ENCODE measurements at regions of chr10 and their contacts with region 1.

Region 1: DNA sequence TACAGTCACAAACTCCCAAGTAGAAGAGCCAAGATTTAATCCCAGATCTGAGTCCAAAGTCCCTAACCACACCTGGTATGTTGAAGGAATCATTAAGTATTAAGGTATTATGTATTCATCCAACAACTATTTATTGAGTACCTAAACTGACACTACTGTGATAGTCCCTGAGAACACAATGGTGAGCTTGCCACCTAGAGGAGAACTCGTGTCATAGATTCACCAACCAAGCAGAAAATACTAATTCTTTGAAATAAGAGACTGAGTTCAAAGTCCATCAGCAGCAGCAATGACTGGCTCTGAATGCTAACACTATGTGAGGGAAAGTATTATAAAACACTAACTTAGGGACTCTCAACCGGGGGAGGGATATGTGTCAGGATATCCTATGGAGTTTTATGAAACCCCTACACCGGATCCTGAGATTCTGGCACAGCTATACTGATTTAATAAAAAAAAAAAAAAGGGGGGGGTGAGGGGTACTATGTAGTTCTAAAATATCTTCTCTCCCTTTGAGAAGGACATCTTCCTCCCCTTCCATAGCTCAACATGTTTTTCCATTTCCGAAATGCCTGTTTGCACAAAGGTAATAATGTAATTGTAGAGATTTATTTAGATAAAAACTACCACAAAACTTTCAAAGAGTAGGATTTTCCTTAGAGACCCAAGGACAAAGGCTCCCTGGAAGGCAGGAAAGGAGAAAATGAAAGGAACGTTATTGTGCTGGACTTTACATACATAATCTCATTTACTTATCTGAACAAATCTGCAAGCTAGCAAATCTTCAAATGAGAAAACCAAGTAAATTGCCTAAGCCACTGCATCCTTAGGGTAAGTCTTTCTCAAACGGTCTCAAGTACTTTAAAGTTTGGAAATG is 1.6 kb downstream of the NCOA4 start:
- DNase-seq: peak; percentile 71
- ATAC-seq: peak; percentile 49
- H3K4me3 ChIP-seq: peak overlapping the region; percentile 86
- H3K27ac ChIP-seq: peak overlapping the region; percentile 11; the same call in 1 of the 2 replicates
- H3K4me1 ChIP-seq: peaks cover 9 to 33% of the 10 kb centered on the region in 2 experiments; a peak in 3 of 4 replicates
- H3K27me3 ChIP-seq: no peaks in the 10 kb centered on the region
- CTCF ChIP-seq: peak; percentile 61 to 79 (median 65)
- POLR2A ChIP-seq: no peak
- RAD21 ChIP-seq: peak; percentile 83

Region 2: GRCh38 chr10:45249978-45250693 is 778.7 kb before region 1 on chr10:
- CTCF ChIA-PET with region 1: interaction called, 7 read pairs
- POLR2A ChIA-PET with region 1: interaction called, 3 read pairs
- RAD21 ChIA-PET with region 1: no interaction called
- intact Hi-C with region 1: loop called (anchors 5 kb)
- DNase-seq: peak; percentile 53
- ATAC-seq: peak; percentile 85
- H3K4me3 ChIP-seq: peak overlapping the region; percentile 40 to 46
- H3K27ac ChIP-seq: peak overlapping the region; percentile 9; the same call in 1 of the 2 replicates
- H3K4me1 ChIP-seq: peaks cover 0 to 10% of the 10 kb centered on the region in 2 experiments; a peak in 1 of 4 replicates
- H3K27me3 ChIP-seq: no peaks in the 10 kb centered on the region
- CTCF ChIP-seq: peak; percentile 33 to 70 (median 51); a peak in 4 of 6 replicates
- POLR2A ChIP-seq: no peak
- RAD21 ChIP-seq: peak; percentile 74

Region 3: DNA sequence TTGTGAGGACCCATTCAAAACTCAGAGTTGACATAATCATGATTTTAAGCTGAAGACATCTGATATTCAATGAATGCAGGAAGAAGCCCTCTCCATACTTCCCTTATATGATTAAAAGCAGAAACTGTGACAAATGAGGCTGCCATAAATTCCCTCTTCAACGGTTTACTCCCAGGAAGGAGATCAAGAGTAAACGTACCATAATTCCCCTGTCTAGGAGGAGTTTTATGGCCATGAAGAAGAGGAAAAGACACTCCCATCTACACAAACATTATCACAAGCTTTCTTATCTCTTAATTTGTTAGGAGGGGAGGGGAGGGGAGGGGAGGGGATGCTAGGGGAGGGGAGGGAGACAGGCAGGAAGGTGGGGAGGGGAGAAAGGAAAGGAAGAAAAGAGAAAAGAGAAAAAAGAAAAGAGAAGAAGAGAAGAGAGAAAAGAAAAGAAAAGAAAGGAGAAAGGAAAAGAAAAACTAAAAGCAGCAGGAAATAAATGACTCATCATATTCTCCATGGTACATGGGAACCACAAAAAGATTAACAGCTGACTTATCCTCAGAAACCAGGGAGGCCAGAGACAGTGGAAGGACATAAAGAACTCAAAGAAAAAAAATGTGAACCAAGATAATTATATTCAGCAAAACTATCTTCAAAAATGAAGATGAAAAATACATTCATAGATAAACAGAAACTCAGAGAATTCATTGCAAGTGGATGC is 533.2 kb before region 1 on chr10:
- CTCF ChIA-PET with region 1: no interaction called
- POLR2A ChIA-PET with region 1: no interaction called
- RAD21 ChIA-PET with region 1: no interaction called
- intact Hi-C with region 1: no loop called
- DNase-seq: peak; percentile 6
- ATAC-seq: no peak
- H3K4me3 ChIP-seq: no peak overlapping the region
- H3K27ac ChIP-seq: no peak overlapping the region
- H3K4me1 ChIP-seq: no peaks in the 10 kb centered on the region
- H3K27me3 ChIP-seq: no peaks in the 10 kb centered on the region
- CTCF ChIP-seq: no peak
- POLR2A ChIP-seq: no peak
- RAD21 ChIP-seq: no peak

Region 4: DNA sequence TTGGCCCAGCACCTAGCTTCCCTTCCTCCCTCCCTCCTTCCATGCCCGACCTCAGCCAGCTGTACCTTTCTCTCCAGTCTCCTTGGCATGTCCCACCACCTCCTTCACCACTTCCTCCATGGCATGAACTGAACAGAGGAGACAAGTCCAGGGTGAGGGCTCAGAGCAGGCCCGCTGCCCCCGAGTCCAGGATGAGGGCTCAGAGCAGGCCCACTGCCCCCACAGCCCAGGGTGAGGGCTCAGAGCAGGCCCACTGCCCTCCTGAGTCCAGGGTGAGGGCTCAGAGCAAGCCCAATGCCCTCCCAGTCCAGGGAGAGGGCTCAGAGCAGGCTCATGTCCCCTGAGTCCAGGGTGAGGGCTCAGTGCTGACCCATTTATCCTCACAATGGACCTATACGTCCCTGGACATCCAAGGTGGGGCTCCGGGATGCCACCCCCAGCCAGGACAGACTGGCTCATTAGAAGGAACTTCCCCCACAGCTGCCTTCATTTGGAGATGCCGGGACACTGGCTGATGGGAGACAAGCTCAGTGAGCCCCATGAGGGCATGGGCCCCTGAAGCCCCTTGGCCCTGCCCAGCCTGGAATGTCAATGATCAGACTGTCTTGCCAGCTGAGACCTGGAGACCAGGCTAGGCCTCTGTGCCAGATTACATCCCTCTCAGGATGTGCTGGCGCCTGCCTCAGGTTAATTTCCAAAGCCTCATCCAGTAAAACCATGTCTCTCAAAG is 211.5 kb before region 1 on chr10:
- CTCF ChIA-PET with region 1: no interaction called
- POLR2A ChIA-PET with region 1: no interaction called
- RAD21 ChIA-PET with region 1: no interaction called
- intact Hi-C with region 1: no loop called
- DNase-seq: no peak
- ATAC-seq: no peak
- H3K4me3 ChIP-seq: no peak overlapping the region
- H3K27ac ChIP-seq: no peak overlapping the region
- H3K4me1 ChIP-seq: no peaks in the 10 kb centered on the region
- H3K27me3 ChIP-seq: no peaks in the 10 kb centered on the region
- CTCF ChIP-seq: no peak
- POLR2A ChIP-seq: no peak
- RAD21 ChIP-seq: no peak

Region 5: DNA sequence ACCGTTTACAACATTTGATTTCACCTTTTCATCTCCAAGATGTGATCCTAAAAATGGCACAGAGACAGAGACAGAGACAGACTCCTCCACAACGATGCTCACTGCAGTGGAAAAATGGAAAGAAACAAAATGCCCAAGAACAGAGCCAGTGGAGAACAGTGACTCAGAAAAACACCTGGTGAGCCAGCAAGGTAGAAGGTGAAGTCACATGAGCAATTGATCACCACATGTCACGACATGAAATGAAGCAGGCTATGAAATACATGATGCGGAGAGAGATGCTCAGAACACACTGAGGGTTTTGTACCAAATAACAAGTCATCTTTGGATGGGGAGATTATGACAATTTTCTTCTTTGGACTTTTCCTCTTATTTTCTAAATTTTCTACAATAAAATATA is 13.7 kb after region 1 on chr10:
- CTCF ChIA-PET with region 1: no interaction called
- POLR2A ChIA-PET with region 1: no interaction called
- RAD21 ChIA-PET with region 1: no interaction called
- intact Hi-C with region 1: no loop called
- DNase-seq: no peak
- ATAC-seq: no peak
- H3K4me3 ChIP-seq: no peak overlapping the region
- H3K27ac ChIP-seq: no peak overlapping the region
- H3K4me1 ChIP-seq: no peaks in the 10 kb centered on the region
- H3K27me3 ChIP-seq: peaks cover 3% of the 10 kb centered on the region; the same call in 1 of the 2 replicates
- CTCF ChIP-seq: no peak
- POLR2A ChIP-seq: no peak
- RAD21 ChIP-seq: no peak

Region 6: GRCh38 chr10:46106410-46107255 is 77.8 kb after region 1 on chr10:
- CTCF ChIA-PET with region 1: no interaction called
- POLR2A ChIA-PET with region 1: no interaction called
- RAD21 ChIA-PET with region 1: no interaction called
- intact Hi-C with region 1: no loop called
- DNase-seq: peak; percentile 21
- ATAC-seq: peak; percentile 98
- H3K4me3 ChIP-seq: peak overlapping the region; percentile 49 to 56
- H3K27ac ChIP-seq: no peak overlapping the region
- H3K4me1 ChIP-seq: peaks cover 8 to 9% of the 10 kb centered on the region in 2 experiments; a peak in 3 of 4 replicates
- H3K27me3 ChIP-seq: no peaks in the 10 kb centered on the region
- CTCF ChIP-seq: no peak
- POLR2A ChIP-seq: peak; percentile 34
- RAD21 ChIP-seq: no peak